Activated naive CD4-positive, alpha-beta T cell treated with anti-CD3 and anti-CD28 coated beads for 36 hours (primary cell): ENCODE measurements at regions of chr2 and their contacts with region 1.

Region 1: DNA sequence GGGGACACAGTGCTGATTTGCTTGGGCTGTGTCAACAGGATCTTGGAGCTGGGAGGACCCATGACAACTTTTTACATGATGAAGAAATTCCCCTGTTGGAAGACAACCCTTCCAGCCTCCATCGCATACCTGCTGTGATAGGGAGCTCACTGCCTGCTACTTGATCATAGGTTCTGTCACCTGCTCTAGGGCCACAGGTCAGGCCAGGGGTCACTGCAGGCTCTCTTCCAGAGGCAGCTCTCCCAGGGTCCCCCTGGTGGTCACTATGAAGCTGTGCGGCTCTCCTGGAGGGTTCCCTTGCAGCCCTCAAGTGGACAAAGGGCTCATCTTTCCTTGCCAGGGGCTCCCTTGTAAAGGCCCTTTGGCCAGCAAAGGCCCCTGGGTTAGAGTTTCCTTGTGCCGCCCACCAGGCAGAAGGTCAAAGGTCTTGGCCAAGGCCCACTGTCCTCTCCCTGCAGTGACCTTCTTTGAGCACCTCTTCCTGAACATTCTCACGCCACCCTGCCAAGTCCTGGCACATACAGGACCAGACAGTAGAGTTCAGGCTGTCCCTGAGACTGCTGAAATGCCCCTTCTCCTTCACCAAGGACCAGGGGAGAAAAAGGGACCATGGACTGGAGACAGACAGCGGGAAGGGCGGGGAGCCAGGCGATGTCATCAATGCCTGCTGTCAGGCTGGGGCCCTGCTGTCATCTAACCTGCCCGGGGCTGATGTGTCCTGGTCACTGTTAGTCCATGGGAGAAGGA is 345.1 kb downstream of the DYSF start:
- DNase-seq: peak; percentile 18
- H3K4me3 Mint-ChIP-seq: no peak overlapping the region
- H3K27ac Mint-ChIP-seq: no peak overlapping the region
- H3K4me1 Mint-ChIP-seq: no peaks in the 10 kb centered on the region
- H3K27me3 Mint-ChIP-seq: peaks cover 4% of the 10 kb centered on the region

Region 2: DNA sequence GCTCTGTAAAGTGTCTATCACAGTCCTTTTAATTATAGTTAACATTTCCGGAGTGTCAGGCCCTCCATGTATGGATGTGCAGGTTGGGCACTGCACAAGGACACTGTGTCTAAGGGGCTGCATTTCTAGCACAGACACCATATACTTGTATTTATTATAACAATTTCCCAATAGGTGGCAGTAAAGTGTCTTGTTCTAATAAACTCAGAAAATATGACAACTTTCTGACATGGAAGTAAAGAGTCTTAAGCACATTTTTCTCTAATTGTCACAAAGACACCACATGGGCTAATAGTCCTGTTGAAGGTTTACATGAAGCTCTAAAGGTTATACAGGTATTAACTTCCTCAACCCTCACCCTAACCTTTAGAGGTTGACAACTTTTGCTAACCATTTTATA is 188.5 kb before region 1 on chr2:
- CTCF ChIA-PET with region 1: interaction called, 3 read pairs
- intact Hi-C with region 1: loop called (anchors 5 kb)
- DNase-seq: no peak
- H3K4me3 Mint-ChIP-seq: no peak overlapping the region
- H3K27ac Mint-ChIP-seq: no peak overlapping the region
- H3K4me1 Mint-ChIP-seq: peaks cover 3% of the 10 kb centered on the region
- H3K27me3 Mint-ChIP-seq: peaks cover 9% of the 10 kb centered on the region

Region 3: GRCh38 chr2:71962911-71963694 is 164.7 kb after region 1 on chr2:
- CTCF ChIA-PET with region 1: no interaction called
- intact Hi-C with region 1: no loop called
- DNase-seq: no peak
- H3K4me3 Mint-ChIP-seq: no peak overlapping the region
- H3K27ac Mint-ChIP-seq: no peak overlapping the region
- H3K4me1 Mint-ChIP-seq: no peaks in the 10 kb centered on the region
- H3K27me3 Mint-ChIP-seq: peaks cover 10% of the 10 kb centered on the region

Region 4: GRCh38 chr2:72475272-72475671 is 676.8 kb after region 1 on chr2:
- CTCF ChIA-PET with region 1: no interaction called
- intact Hi-C with region 1: no loop called
- DNase-seq: no peak
- H3K4me3 Mint-ChIP-seq: no peak overlapping the region
- H3K27ac Mint-ChIP-seq: no peak overlapping the region
- H3K4me1 Mint-ChIP-seq: no peaks in the 10 kb centered on the region
- H3K27me3 Mint-ChIP-seq: no peaks in the 10 kb centered on the region

Region 5: GRCh38 chr2:72579591-72580180 is 781.2 kb after region 1 on chr2:
- CTCF ChIA-PET with region 1: no interaction called
- intact Hi-C with region 1: loop called (anchors 10 kb)
- DNase-seq: no peak
- H3K4me3 Mint-ChIP-seq: no peak overlapping the region
- H3K27ac Mint-ChIP-seq: no peak overlapping the region
- H3K4me1 Mint-ChIP-seq: no peaks in the 10 kb centered on the region
- H3K27me3 Mint-ChIP-seq: no peaks in the 10 kb centered on the region